CD8-positive, alpha-beta memory T cell (primary cell): ENCODE measurements at regions of chr7 and their contacts with region 1.

Region 1: GRCh38 chr7:108569381-108570145 is at the starts of genes DNAJB9 and THAP5:
- DNase-seq: peak; percentile 98 to 100 (median 100)
- H3K4me3 ChIP-seq: peak within 1 kb of the TSS; percentile 92
- H3K4me3 Mint-ChIP-seq: peak within 1 kb of the TSS; percentile 92 to 99 (median 95)
- H3K27ac ChIP-seq: peak within 1 kb of the TSS; percentile 100
- H3K27ac Mint-ChIP-seq: peak within 1 kb of the TSS; percentile 97 to 100 (median 100)
- H3K4me1 ChIP-seq: peaks cover 38% of the 10 kb centered on the region
- H3K4me1 Mint-ChIP-seq: peaks cover 61 to 83% (median 77%) of the 10 kb centered on the region in 3 donors
- H3K27me3 ChIP-seq: no peaks in the 10 kb centered on the region
- H3K27me3 Mint-ChIP-seq: peaks cover 0 to 5% of the 10 kb centered on the region in 2 donors
- total RNA-seq, gene DNAJB9: 10.1 to 12.0 TPM
- total RNA-seq, gene THAP5: 36.8 to 40.9 TPM

Region 2: GRCh38 chr7:108525985-108526767 is 43.4 kb before region 1 on chr7 and contains the start of gene PNPLA8:
- CTCF ChIA-PET with region 1: interaction called, 6 read pairs
- POLR2A ChIA-PET with region 1: interaction called, 72 read pairs
- DNase-seq: peak; percentile 100
- H3K4me3 ChIP-seq: peak within 1 kb of the TSS; percentile 83
- H3K4me3 Mint-ChIP-seq: peak within 1 kb of the TSS; percentile 88 to 99 (median 98)
- H3K27ac ChIP-seq: peak within 1 kb of the TSS; percentile 98
- H3K27ac Mint-ChIP-seq: peak within 1 kb of the TSS; percentile 93 to 100 (median 99)
- H3K4me1 ChIP-seq: peaks cover 33% of the 10 kb centered on the region
- H3K4me1 Mint-ChIP-seq: peaks cover 45 to 53% (median 46%) of the 10 kb centered on the region in 3 donors
- H3K27me3 ChIP-seq: no peaks in the 10 kb centered on the region
- H3K27me3 Mint-ChIP-seq: no peaks in the 10 kb centered on the region
- total RNA-seq, gene PNPLA8: 16.3 to 17.9 TPM